ENCODE measurements at regions of chr2 and their contacts with region 1.

Region 1: DNA sequence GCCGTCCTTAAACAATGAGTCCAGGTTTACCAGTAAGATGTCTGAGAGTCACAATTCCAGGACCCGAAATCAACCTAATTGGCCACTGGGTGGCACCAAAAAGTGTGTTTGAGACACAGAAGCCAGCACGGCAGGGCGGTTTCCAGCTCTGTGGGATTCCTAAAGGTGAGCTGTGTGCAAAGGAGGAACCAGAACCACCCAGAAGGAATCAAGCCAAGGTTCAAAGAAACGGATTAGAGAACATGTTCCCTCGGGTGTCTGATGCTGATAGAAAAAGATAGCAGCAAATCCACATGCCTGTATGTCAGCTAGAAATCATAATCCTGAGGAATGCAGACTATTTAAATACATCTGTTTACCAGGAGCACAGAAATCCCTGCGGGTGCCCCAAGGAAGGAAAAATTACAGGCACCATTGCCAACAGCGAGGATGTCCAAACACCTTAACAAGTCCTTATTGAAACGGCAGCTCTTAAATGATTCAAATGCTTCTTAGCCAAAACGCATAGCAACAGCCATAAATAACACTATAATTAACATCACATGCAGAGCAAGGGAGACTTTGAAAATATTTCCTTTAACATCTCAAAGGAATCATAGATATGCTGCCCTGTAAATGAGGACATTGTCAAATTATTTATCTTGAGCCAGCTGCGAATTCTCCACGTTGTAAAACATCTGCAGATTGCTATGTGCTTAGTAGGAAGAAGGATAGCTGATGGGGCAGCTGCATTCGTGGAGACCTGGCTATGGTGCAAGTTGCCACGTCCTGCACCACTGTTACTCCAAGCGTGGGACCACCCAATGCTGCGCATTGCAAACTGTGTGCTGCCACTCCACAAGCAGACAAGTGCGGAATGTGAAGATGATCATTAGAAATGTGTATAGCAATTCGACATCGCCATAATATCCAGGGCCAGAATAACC is 318.7 kb upstream of the NCKAP5 start:
- DNase-seq: peak; percentile 49 to 67
- ATAC-seq: peak; percentile 53 to 67 (median 58)
- H3K4me3 ChIP-seq: no peak overlapping the region
- H3K27ac ChIP-seq: no peak overlapping the region
- H3K4me1 ChIP-seq: no peaks in the 10 kb centered on the region
- H3K27me3 ChIP-seq: peaks cover 0 to 4% (median 0%) of the 10 kb centered on the region in 3 donors
- CTCF ChIP-seq: peak; percentile 60

Region 2: DNA sequence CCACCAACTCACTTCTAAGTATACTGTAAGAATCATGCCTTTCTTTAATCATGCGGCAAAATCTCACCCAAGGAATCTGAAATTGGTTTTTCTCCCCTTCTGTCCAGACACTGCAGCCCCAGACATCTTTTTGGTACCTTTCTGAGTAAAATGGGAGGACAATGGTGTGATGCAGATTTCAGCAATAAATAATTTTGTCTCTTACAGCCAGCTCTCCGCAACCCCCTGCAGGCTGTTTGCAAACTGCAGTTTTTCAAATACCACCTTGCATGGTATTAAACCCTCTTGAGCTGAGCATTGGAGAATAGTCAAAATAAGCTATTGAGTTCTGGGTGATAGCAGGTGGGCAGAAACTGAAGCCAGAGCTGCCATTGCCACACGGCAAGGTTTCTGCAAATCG is 1438.2 kb before region 1 on chr2:
- intact Hi-C with region 1: no loop called
- DNase-seq: no peak
- ATAC-seq: no peak
- H3K4me3 ChIP-seq: no peak overlapping the region
- H3K27ac ChIP-seq: no peak overlapping the region
- H3K4me1 ChIP-seq: no peaks in the 10 kb centered on the region
- H3K27me3 ChIP-seq: peaks cover 0 to 2% (median 0%) of the 10 kb centered on the region in 3 donors
- CTCF ChIP-seq: peak; percentile 51

Region 3: DNA sequence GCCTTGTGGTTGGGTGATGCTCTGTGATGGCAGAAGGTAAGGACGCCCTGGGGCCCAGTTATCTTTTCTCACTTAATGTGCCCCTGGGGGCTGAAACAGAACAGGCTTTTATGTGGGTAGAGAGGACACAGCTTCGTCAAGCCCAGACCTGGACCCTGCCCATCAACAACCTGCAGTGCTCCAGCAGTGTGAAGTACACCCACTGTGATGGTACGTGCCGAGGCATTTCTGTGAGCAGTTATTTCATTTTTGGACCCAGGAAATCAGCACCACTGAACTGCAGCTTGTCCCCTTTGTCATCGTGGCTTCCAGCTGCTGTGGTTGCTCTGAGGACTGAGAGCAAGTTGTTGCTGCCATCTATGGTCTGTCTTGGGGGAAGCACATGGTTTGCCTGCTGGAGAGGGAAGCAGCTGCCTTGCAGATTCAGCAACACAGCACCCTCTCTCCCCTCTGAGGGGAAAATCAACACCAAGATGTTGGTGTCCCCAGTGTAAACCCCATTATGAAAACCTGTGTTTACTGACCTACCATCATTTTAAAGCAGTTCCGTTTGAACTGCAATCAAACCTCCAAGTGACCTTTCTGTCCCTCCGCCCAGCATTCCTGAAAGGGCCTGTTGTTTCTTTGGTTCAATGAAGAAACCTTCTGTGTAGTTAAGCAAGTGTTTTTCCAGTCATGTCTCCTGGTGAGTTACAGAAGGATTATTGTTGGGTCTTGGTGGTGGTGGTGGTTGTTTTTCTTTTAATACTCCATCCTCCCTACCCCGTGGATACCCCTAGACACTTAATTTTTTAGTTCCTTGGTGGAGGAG is 525.0 kb after region 1 on chr2:
- intact Hi-C with region 1: loop called in 1 of 2 experiments (anchors 2 kb)
- DNase-seq: peak; percentile 51 to 69
- ATAC-seq: peak; percentile 89 to 96 (median 92)
- H3K4me3 ChIP-seq: no peak overlapping the region
- H3K27ac ChIP-seq: no peak overlapping the region
- H3K4me1 ChIP-seq: no peaks in the 10 kb centered on the region
- H3K27me3 ChIP-seq: no peaks in the 10 kb centered on the region
- CTCF ChIP-seq: peak; percentile 70